Activated T-helper 1 cell treated with anti-CD3 and anti-CD28 coated beads, Interleukin-12 subunit alpha, Interleukin-12 subunit beta, Interleukin-2, Interleukin-4 antibody, amounts not matched to agents 30 ng/mL and 10 ng/mL and 1 ng/mL, durations not matched to agents 14 hours and 24 hours and 36 hours (primary cell): ENCODE measurements at regions of chr16 and their contacts with region 1.

Region 1: GRCh38 chr16:68093816-68094613 is 8.8 kb downstream of the NFATC3 start:
- DNase-seq: no peak
- H3K4me3 Mint-ChIP-seq: peak overlapping the region; percentile 21
- H3K27ac Mint-ChIP-seq: peak overlapping the region; percentile 78
- H3K4me1 Mint-ChIP-seq: peaks cover 79% of the 10 kb centered on the region
- H3K27me3 Mint-ChIP-seq: no peaks in the 10 kb centered on the region

Region 2: DNA sequence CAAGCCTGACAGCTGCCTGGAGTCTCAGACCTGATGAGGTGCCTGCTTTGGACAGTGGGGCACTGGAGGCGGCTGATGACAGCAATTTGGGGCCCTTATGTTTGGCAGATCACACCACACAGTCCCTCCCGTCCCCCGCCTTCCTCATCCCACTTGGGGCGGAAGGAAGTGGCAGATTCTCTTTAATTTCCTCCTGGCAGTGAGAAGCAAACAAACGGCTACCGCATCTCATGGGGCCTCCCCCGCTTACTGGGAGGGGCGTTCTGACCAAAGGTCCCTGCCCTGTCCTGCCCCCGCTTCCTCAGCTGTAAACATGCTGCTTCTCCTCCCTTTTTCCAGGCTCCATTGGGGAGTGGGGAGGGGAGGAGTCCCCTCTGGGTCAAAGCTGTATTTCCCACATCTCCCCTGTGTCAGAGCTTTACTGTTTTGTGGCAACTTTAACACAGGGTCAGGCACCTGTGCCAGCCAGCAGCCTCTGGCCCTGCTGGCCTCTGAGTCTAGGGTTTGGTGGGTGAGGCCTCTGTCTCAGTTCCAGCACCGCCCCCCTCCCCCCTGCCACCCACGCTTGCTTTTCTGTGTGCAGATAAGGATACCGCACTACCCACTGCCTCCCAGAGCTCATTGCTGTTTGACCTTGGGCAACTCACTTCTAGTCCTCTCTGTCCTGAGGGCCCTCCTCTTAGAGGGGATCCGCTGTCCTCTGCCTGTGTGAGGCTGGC is 14.2 kb before region 1 on chr16:
- intact Hi-C with region 1: loop called (anchors 1 kb)
- DNase-seq: peak; percentile 73
- H3K4me3 Mint-ChIP-seq: peak overlapping the region; percentile 75
- H3K27ac Mint-ChIP-seq: peak overlapping the region; percentile 97
- H3K4me1 Mint-ChIP-seq: peaks cover 86% of the 10 kb centered on the region
- H3K27me3 Mint-ChIP-seq: peaks cover 2% of the 10 kb centered on the region

Region 3: GRCh38 chr16:68131813-68132706 is 38.0 kb after region 1 on chr16:
- intact Hi-C with region 1: loop called (anchors 5 kb)
- DNase-seq: no peak
- H3K4me3 Mint-ChIP-seq: peak overlapping the region; percentile 31
- H3K27ac Mint-ChIP-seq: peak overlapping the region; percentile 41
- H3K4me1 Mint-ChIP-seq: peaks cover 38% of the 10 kb centered on the region
- H3K27me3 Mint-ChIP-seq: no peaks in the 10 kb centered on the region

Region 4: GRCh38 chr16:68179196-68179795 is 85.3 kb after region 1 on chr16:
- intact Hi-C with region 1: no loop called
- DNase-seq: no peak
- H3K4me3 Mint-ChIP-seq: no peak overlapping the region
- H3K27ac Mint-ChIP-seq: no peak overlapping the region
- H3K4me1 Mint-ChIP-seq: no peaks in the 10 kb centered on the region
- H3K27me3 Mint-ChIP-seq: no peaks in the 10 kb centered on the region

Region 5: GRCh38 chr16:68214726-68215125 is 120.7 kb after region 1 on chr16:
- intact Hi-C with region 1: loop called (anchors 5 kb)
- DNase-seq: no peak
- H3K4me3 Mint-ChIP-seq: no peak overlapping the region
- H3K27ac Mint-ChIP-seq: no peak overlapping the region
- H3K4me1 Mint-ChIP-seq: peaks cover 25% of the 10 kb centered on the region
- H3K27me3 Mint-ChIP-seq: no peaks in the 10 kb centered on the region

Region 6: DNA sequence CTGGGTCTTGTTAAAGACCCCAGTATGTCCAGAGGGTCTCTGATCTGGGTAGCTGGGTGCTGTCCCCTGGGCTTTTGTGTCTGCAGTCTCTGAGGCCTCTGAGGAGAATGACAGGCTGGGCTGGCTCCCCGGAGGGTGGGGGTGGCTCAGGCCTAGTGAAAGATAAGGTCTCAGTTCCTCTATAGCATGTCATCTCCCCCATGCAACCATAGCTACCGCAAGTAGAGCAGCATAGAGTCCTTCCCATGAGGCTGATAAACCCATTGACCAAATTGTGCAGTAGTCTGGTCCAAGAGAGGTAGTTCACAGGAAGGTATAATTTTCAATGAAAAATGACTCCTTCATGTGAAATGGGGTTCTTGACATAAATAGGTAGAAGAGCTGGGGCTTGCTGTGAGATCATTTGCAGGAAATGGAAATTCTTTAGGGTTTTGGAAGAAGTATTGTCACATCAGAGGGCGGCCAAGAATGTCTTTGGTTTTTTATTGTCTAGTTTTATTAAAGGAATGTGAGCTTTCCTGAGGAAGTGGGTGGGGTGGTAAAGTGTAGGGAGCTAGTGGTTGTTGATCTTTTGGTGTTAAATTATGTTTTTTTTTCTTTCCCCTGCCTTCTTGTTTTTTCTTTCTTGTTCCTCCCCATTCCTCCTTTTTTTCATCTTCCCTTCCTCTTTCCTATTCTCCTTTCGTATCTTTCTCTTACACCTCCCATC is 195.8 kb after region 1 on chr16:
- intact Hi-C with region 1: loop called (anchors 5 kb)
- DNase-seq: peak; percentile 40
- H3K4me3 Mint-ChIP-seq: peak overlapping the region; percentile 67
- H3K27ac Mint-ChIP-seq: peak overlapping the region; percentile 97
- H3K4me1 Mint-ChIP-seq: peaks cover 92% of the 10 kb centered on the region
- H3K27me3 Mint-ChIP-seq: no peaks in the 10 kb centered on the region